ENCODE measurements at regions of chr12 and their contacts with region 1.

Region 1: DNA sequence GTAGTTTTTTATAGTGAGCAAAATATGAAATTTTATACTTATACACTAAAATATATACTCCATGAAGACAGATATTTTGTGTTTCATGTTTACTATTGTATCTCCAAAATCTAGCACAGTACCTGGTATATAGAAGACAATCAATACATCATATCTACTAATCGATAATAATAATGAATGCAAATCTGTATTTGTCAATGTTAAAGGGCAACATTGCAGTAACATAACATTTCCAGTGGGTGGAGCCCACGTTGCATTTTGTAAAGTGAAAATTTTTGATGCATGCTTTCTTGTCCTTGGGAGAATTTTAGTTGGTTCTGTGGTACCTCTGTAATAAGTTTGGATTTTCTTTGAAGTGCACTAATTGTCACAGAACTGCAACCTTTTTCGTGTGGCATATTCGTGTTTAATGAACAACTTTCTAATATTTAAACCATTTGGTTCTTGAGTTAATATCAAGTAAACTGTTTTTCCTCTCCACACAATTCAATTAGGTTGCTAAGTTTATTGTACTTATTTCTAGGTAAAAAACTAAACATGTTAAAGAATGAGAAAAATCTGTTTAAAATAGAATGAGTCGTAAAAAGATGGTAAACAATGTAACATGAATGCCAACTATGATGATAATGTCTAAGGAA is 47.4 kb downstream of the AVPR1A start:
- DNase-seq: peak in 1 of 7 donors; percentile 15
- H3K4me3 ChIP-seq: no peak overlapping the region
- H3K27ac ChIP-seq: no peak overlapping the region
- H3K4me1 ChIP-seq: no peaks in the 10 kb centered on the region
- H3K27me3 ChIP-seq: no peaks in the 10 kb centered on the region
- CTCF ChIP-seq: peak; percentile 54 to 92 (median 82)
- POLR2A ChIP-seq: no peak

Region 2: GRCh38 chr12:63037746-63038718 is 65.6 kb before region 1 on chr12:
- intact Hi-C with region 1: no loop called
- DNase-seq: no peak
- H3K4me3 ChIP-seq: no peak overlapping the region
- H3K27ac ChIP-seq: no peak overlapping the region
- H3K4me1 ChIP-seq: no peaks in the 10 kb centered on the region
- H3K27me3 ChIP-seq: no peaks in the 10 kb centered on the region
- CTCF ChIP-seq: no peak
- POLR2A ChIP-seq: no peak

Region 3: GRCh38 chr12:63276537-63277365 is 173.1 kb after region 1 on chr12:
- intact Hi-C with region 1: loop called (anchors 2 to 5 kb)
- DNase-seq: peak; percentile 60 to 87 (median 68)
- H3K4me3 ChIP-seq: peak overlapping the region in 1 of 4 donors; percentile 13
- H3K27ac ChIP-seq: no peak overlapping the region
- H3K4me1 ChIP-seq: no peaks in the 10 kb centered on the region
- H3K27me3 ChIP-seq: no peaks in the 10 kb centered on the region
- CTCF ChIP-seq: peak; percentile 62 to 93 (median 78)
- POLR2A ChIP-seq: no peak

Measured in adrenal gland (tissue), 19 donors.